ENCODE measurements at regions of chrX and their contacts with region 1.

Region 1: GRCh38 chrX:110021180-110022022 is 18.5 kb downstream of the TMEM164 start:
- DNase-seq: peak; percentile 11 to 53
- ATAC-seq: peak; percentile 71 to 79
- H3K4me3 ChIP-seq: no peak overlapping the region
- H3K27ac ChIP-seq: peak overlapping the region; percentile 74 to 84 (median 79)
- H3K4me1 ChIP-seq: peaks cover 33 to 35% of the 10 kb centered on the region in 2 donors
- H3K27me3 ChIP-seq: peaks cover 0 to 3% (median 0%) of the 10 kb centered on the region in 3 donors
- CTCF ChIP-seq: no peak
- POLR2A ChIP-seq: no peak

Region 2: GRCh38 chrX:109732780-109733657 is 288.4 kb before region 1 on chrX and contains the start of gene ACSL4:
- in situ Hi-C with region 1: no loop called
- intact Hi-C with region 1: no loop called
- DNase-seq: peak; percentile 65 to 80
- ATAC-seq: peak; percentile 74 to 85
- H3K4me3 ChIP-seq: peak within 1 kb of the TSS; percentile 62 to 85 (median 80)
- H3K27ac ChIP-seq: peak within 1 kb of the TSS; percentile 82 to 91 (median 86)
- H3K4me1 ChIP-seq: peaks cover 0 to 5% of the 10 kb centered on the region in 2 donors
- H3K27me3 ChIP-seq: no peaks in the 10 kb centered on the region
- CTCF ChIP-seq: no peak
- POLR2A ChIP-seq: peak; percentile 70 to 86
- total RNA-seq, gene ACSL4: 18.7 to 259 (median 132) TPM

Region 3: DNA sequence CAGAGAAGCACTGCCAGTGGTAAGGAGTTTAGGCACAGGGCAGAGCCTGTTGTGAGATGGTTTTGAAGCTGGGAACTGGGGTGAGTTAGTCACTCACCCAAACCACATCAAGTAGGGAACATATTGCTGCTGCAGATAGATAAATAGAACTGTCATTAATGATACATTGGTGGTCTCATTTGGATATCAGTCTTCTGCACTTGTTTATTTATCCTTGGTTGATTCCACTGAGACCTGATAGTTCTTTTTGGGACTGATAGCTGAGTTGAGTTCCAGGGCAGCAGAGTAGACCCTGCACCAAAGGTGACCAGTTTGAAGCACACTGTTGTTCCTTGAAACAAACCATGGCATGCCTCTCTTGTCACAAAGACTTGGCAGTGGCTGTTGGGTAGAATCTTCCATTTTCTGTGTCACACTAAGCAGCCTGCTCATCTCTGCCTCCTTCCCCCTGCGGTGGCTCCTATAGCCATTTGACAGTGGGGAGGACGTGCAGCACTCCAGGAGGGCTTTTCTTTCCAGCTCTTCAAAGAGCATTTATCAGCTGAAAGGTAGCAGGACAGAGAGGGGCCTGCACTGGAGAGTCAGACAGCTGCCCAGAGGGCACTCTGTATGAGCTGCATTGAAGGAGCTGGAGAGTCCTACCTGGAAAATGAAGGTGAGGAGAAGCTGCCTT is 78.2 kb before region 1 on chrX:
- in situ Hi-C with region 1: no loop called
- intact Hi-C with region 1: no loop called
- DNase-seq: no peak
- ATAC-seq: no peak
- H3K4me3 ChIP-seq: no peak overlapping the region
- H3K27ac ChIP-seq: no peak overlapping the region
- H3K4me1 ChIP-seq: no peaks in the 10 kb centered on the region
- H3K27me3 ChIP-seq: no peaks in the 10 kb centered on the region
- CTCF ChIP-seq: no peak
- POLR2A ChIP-seq: no peak

Region 4: DNA sequence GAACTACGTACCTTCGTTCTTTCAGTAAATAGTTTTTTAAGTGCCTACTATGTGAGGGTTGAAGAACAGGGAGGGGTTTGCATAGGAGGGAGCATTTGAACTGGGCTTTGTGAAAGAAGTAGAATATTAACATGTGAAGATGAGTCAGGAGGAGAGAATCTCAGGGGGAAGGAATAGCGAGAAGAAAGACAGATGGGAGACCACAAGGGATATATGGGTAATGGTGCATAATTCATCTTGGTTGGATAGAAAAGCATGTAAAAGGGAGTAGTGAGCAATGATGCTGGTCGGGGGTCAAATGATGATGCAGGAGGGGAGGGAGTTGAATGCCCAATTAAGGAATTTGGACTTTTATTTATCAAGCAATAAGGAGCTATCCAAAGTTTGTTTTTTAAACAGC is 34.2 kb after region 1 on chrX:
- in situ Hi-C with region 1: no loop called
- intact Hi-C with region 1: loop called (anchors 2 kb)
- DNase-seq: no peak
- ATAC-seq: no peak
- H3K4me3 ChIP-seq: no peak overlapping the region
- H3K27ac ChIP-seq: peak overlapping the region; percentile 78 to 86 (median 80)
- H3K4me1 ChIP-seq: peaks cover 16 to 26% of the 10 kb centered on the region in 2 donors
- H3K27me3 ChIP-seq: no peaks in the 10 kb centered on the region
- CTCF ChIP-seq: no peak
- POLR2A ChIP-seq: no peak

Region 5: DNA sequence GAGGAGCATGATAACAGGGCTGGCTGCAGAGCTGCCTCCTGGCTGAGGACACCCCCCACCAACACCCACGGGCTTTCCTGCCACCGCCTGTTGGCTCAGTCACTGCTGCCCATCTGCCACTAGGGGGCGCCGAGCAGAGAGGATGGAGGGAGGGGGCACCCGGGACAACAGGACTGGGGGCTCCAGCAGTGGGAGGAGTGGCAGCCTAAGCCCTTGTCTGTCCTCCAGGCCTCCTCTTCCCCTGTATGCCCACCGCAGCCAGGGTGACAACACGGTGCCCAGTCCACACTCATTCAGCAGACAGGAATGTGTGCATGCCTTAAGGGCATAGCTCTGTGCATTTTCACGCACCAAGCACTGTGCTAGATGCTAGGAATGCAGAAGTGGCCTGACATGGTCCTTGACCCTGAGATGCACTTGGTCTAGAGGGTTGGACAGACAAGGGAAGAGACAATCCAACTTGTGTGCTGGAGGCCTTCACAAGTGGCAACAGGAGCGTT is 146.6 kb after region 1 on chrX:
- in situ Hi-C with region 1: no loop called
- intact Hi-C with region 1: no loop called
- DNase-seq: no peak
- ATAC-seq: no peak
- H3K4me3 ChIP-seq: no peak overlapping the region
- H3K27ac ChIP-seq: no peak overlapping the region
- H3K4me1 ChIP-seq: peaks cover 0 to 8% of the 10 kb centered on the region in 2 donors
- H3K27me3 ChIP-seq: no peaks in the 10 kb centered on the region
- CTCF ChIP-seq: peak in 4 of 5 experiments; percentile 13 to 57 (median 40)
- POLR2A ChIP-seq: no peak

Measured in gastrocnemius medialis (tissue), 4 donors.